ENCODE measurements at regions of chr9 and their contacts with region 1.

Region 1: DNA sequence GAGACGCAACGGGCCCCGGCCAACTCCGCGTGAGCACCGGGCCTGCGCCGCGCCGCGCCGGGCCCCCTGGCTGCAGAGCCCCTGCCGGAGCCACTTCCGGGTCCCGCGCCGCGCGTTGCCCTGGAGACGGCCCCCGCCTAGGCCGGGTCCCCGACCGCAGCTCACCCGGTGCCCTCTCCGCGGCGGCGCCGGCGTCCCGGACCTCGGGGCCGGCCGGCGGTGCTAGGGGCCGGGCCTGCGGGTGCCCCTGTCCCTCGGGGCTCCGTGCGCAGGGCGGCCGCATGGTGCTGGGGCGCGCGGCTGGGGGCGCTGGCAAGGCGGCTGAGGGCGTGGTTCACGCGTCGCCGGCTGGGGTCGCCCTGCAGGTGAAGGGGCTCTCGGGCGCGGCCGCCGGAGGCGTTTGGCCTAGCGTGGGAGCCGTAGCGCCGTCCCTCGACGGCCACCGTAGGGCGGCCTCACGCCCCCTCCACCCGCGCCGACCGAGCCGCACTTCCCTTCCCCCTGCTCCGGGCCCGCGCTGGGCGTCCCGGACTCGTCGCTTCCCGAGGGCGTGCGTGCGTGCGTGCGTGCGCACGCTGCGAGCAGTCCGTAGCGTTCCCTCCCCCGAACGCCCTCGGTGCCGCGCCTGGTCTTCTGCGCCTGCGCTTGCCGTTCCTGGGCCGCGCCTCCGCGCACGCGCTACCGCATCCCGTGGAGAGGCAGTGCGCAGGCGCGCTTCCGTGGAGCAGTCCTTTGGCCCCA is at the start of gene TMEM250:
- DNase-seq: peak; percentile 96
- H3K4me3 Mint-ChIP-seq: peak within 1 kb of the TSS; percentile 78
- H3K27ac Mint-ChIP-seq: peak within 1 kb of the TSS; percentile 80
- H3K4me1 Mint-ChIP-seq: peaks cover 37% of the 10 kb centered on the region
- H3K27me3 Mint-ChIP-seq: no peaks in the 10 kb centered on the region
- total RNA-seq, gene TMEM250: 20.7 to 22.2 TPM

Region 2: GRCh38 chr9:135797507-135798262 is 320.8 kb before region 1 on chr9:
- CTCF ChIA-PET with region 1: interaction called, 3 read pairs
- intact Hi-C with region 1: loop called (anchors 10 kb)
- DNase-seq: peak; percentile 63
- H3K4me3 Mint-ChIP-seq: no peak overlapping the region
- H3K27ac Mint-ChIP-seq: no peak overlapping the region
- H3K4me1 Mint-ChIP-seq: no peaks in the 10 kb centered on the region
- H3K27me3 Mint-ChIP-seq: peaks cover 3% of the 10 kb centered on the region

Region 3: DNA sequence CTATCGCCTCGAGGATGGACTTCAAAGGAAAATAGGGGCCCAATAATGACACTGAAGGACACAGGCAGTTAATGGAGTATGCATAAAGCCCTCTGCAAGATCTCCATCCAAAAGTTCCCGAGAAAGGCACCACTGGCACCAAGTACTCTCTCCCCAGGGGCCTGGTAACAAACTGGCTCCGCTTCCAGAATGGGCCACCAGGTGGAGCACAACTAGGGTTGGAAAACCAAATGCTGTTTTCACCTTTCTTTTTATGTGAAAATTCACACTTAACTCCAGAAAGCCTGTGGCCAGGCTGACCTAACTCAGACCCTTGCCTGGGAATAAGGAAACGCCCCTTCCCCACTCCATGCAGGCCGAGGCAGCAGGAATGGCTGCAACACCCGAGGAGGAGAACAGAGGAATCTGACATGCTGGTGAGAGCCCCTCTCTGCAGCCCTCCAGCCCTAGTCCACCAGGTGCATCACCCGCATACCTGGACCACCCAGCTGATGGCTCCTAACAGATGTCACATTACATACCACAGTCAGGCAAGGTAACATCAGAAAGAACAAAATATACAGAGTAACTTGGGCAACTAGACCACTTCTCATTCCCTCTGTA is 253.9 kb before region 1 on chr9:
- CTCF ChIA-PET with region 1: no interaction called
- intact Hi-C with region 1: loop called (anchors 2 kb)
- DNase-seq: peak; percentile 84
- H3K4me3 Mint-ChIP-seq: no peak overlapping the region
- H3K27ac Mint-ChIP-seq: no peak overlapping the region
- H3K4me1 Mint-ChIP-seq: peaks cover 21% of the 10 kb centered on the region
- H3K27me3 Mint-ChIP-seq: no peaks in the 10 kb centered on the region

Region 4: DNA sequence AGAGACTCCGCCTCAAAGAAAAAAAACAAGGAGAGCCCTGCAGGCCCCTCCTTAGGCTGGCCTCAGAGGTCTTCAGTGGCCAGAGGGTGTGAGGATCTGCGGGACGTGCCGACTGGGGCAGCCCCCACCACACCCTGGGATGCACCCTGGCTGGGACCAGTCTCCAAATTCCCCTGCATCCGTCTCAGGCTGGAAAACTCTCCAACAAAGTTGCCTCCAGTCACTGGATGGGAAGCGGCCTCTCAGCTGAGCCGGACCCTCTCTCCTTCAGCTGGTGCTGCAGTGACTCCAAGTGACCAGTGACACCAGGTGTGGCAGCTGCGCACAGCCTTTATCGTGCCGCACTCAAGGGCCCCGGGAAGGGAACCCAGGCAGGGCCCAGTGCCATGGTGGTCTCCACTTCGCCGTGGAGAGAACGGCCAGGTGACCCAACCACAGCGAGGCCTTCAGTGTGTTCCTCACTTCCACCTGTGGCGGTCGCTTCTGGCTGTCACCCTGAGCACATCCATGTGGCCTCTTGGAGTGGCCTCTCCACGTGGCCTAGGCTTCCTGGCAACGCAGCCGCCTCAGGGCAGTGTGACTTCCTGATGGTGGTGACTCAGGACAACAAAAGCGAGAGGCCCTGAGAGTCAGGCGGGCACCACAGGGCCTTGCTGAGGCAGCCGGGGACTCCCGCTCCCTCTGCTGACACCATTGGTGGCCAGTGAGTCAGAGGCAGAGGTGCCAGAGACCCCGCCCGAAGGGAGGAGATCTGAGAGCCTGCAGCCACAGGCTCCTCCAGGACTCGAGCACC is 191.9 kb before region 1 on chr9:
- CTCF ChIA-PET with region 1: no interaction called
- intact Hi-C with region 1: loop called (anchors 1 kb)
- DNase-seq: peak; percentile 92
- H3K4me3 Mint-ChIP-seq: no peak overlapping the region
- H3K27ac Mint-ChIP-seq: peak overlapping the region; percentile 85
- H3K4me1 Mint-ChIP-seq: peaks cover 31% of the 10 kb centered on the region
- H3K27me3 Mint-ChIP-seq: no peaks in the 10 kb centered on the region

Region 5: DNA sequence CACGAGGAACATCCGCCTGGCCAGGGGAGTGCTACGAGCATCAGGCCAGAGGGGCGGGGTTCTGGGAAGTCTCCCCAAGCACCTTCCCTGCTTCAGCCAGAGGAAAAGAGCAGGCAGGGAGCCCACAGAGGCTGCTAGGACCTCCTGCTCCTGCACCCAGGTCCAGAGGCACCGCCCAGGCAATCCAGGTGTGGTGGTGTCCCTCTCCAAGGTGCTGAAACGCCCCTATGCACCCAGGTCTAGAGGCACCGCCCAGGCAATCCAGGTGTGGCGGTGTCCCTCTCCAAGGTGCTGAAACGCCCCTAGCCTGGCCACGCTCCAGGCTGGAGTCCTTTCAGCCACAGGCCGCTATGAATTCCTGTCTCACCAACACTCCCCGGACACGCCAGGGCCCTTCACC is 146.6 kb before region 1 on chr9:
- CTCF ChIA-PET with region 1: interaction called, 69 read pairs
- intact Hi-C with region 1: loop called (anchors 1 kb)
- DNase-seq: peak; percentile 58
- H3K4me3 Mint-ChIP-seq: no peak overlapping the region
- H3K27ac Mint-ChIP-seq: no peak overlapping the region
- H3K4me1 Mint-ChIP-seq: peaks cover 9% of the 10 kb centered on the region
- H3K27me3 Mint-ChIP-seq: no peaks in the 10 kb centered on the region

Region 6: DNA sequence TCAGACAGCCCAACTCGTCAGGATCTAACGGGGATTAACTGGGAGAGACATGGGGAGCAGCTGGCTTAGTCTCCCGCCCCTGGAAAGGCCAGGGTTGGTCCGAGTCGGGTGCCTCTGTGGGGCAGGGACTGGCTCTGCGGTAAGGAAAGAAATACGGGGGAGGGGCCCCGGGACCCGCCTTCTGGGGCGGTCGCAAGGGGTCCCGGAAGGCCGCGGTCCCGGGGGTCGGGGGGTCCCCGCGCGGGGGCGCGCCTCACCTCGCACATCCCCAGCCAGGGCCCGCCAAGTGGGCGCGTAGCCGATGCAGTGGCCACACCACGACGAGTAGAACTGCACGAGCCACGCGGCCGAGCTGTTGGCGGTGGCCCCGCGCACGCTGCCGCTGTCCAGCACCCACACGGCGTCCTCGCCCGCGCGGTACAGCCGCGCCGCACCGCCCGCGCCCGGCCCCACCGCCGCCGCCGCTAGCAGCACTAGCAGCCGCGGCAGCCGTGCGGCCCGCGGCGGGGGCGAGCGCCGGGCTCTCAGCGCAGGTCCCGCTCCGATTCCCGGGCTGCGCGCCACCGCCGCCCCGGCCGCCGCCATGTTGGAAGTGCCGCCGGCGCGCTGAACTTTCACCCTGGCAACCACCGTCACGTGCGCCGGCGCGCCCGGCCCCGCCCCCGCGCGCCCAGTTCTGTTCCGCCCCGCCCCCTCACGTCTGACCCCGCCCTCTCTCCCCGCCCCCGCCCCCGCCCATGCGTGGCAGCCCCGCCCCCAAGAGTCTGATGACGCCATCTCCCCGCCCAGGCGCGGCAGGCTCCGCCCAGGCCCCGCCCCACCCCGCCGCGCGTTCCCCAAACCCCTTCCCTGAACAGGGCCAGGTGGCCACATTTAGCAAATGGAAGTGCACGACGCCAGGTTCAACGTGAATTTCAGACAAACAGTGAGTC is 127.0 kb after region 1 on chr9 and contains the start of gene QSOX2:
- CTCF ChIA-PET with region 1: no interaction called
- intact Hi-C with region 1: loop called (anchors 2 kb)
- DNase-seq: peak; percentile 85
- H3K4me3 Mint-ChIP-seq: peak within 1 kb of the TSS; percentile 92
- H3K27ac Mint-ChIP-seq: peak within 1 kb of the TSS; percentile 88
- H3K4me1 Mint-ChIP-seq: peaks cover 35% of the 10 kb centered on the region
- H3K27me3 Mint-ChIP-seq: no peaks in the 10 kb centered on the region
- total RNA-seq, gene QSOX2: 17.7 to 18.0 TPM